ENCODE measurements at regions of chr12 and their contacts with region 1.

Region 1: GRCh38 chr12:31362759-31363415 is 36.9 kb upstream of the SINHCAF start:
- DNase-seq: peak; percentile 72 to 77
- H3K4me3 ChIP-seq: peak overlapping the region; percentile 47; the same call in 1 of the 2 replicates
- H3K27ac ChIP-seq: peak overlapping the region; percentile 63
- H3K4me1 ChIP-seq: peaks cover 24% of the 10 kb centered on the region
- H3K27me3 ChIP-seq: no peaks in the 10 kb centered on the region
- CTCF ChIP-seq: peak; percentile 29; the same call in 1 of the 2 replicates

Region 2: GRCh38 chr12:31029916-31030562 is 332.8 kb before region 1 on chr12:
- CTCF ChIA-PET with region 1: interaction called, 14 read pairs
- POLR2A ChIA-PET with region 1: no interaction called
- intact Hi-C with region 1: no loop called
- DNase-seq: peak in 1 of 2 experiments; percentile 64
- H3K4me3 ChIP-seq: no peak overlapping the region
- H3K27ac ChIP-seq: no peak overlapping the region
- H3K4me1 ChIP-seq: peaks cover 59% of the 10 kb centered on the region
- H3K27me3 ChIP-seq: no peaks in the 10 kb centered on the region
- CTCF ChIP-seq: no peak

Region 3: GRCh38 chr12:31245822-31246469 is 116.9 kb before region 1 on chr12:
- CTCF ChIA-PET with region 1: no interaction called
- POLR2A ChIA-PET with region 1: no interaction called
- intact Hi-C with region 1: loop called (anchors 5 kb)
- DNase-seq: peak in 1 of 2 experiments; percentile 33
- H3K4me3 ChIP-seq: no peak overlapping the region
- H3K27ac ChIP-seq: no peak overlapping the region
- H3K4me1 ChIP-seq: no peaks in the 10 kb centered on the region
- H3K27me3 ChIP-seq: no peaks in the 10 kb centered on the region
- CTCF ChIP-seq: no peak

Region 4: GRCh38 chr12:31274520-31275300 is 88.2 kb before region 1 on chr12:
- CTCF ChIA-PET with region 1: interaction called, 11 read pairs
- POLR2A ChIA-PET with region 1: no interaction called
- intact Hi-C with region 1: loop called (anchors 2 kb)
- DNase-seq: no peak
- H3K4me3 ChIP-seq: no peak overlapping the region
- H3K27ac ChIP-seq: no peak overlapping the region
- H3K4me1 ChIP-seq: no peaks in the 10 kb centered on the region
- H3K27me3 ChIP-seq: no peaks in the 10 kb centered on the region
- CTCF ChIP-seq: no peak

Region 5: GRCh38 chr12:31631784-31632183 is 268.9 kb after region 1 on chr12:
- CTCF ChIA-PET with region 1: no interaction called
- POLR2A ChIA-PET with region 1: no interaction called
- intact Hi-C with region 1: loop called (anchors 1 kb)
- DNase-seq: no peak
- H3K4me3 ChIP-seq: no peak overlapping the region
- H3K27ac ChIP-seq: no peak overlapping the region
- H3K4me1 ChIP-seq: no peaks in the 10 kb centered on the region
- H3K27me3 ChIP-seq: no peaks in the 10 kb centered on the region
- CTCF ChIP-seq: no peak

Region 6: GRCh38 chr12:31659087-31659933 is 296.4 kb after region 1 on chr12 and contains the start of gene ETFBKMT:
- CTCF ChIA-PET with region 1: interaction called, 10 read pairs
- POLR2A ChIA-PET with region 1: no interaction called
- intact Hi-C with region 1: no loop called
- DNase-seq: peak; percentile 94 to 97
- H3K4me3 ChIP-seq: peak within 1 kb of the TSS; percentile 62
- H3K27ac ChIP-seq: peak within 1 kb of the TSS; percentile 63
- H3K4me1 ChIP-seq: peaks cover 17% of the 10 kb centered on the region
- H3K27me3 ChIP-seq: no peaks in the 10 kb centered on the region
- CTCF ChIP-seq: peak; percentile 60
- total RNA-seq, gene ETFBKMT: 2.2 and 2.4 TPM in 2 replicates